GM12878 (cell line): ENCODE measurements at regions of chr5 and their contacts with region 1.

Region 1: DNA sequence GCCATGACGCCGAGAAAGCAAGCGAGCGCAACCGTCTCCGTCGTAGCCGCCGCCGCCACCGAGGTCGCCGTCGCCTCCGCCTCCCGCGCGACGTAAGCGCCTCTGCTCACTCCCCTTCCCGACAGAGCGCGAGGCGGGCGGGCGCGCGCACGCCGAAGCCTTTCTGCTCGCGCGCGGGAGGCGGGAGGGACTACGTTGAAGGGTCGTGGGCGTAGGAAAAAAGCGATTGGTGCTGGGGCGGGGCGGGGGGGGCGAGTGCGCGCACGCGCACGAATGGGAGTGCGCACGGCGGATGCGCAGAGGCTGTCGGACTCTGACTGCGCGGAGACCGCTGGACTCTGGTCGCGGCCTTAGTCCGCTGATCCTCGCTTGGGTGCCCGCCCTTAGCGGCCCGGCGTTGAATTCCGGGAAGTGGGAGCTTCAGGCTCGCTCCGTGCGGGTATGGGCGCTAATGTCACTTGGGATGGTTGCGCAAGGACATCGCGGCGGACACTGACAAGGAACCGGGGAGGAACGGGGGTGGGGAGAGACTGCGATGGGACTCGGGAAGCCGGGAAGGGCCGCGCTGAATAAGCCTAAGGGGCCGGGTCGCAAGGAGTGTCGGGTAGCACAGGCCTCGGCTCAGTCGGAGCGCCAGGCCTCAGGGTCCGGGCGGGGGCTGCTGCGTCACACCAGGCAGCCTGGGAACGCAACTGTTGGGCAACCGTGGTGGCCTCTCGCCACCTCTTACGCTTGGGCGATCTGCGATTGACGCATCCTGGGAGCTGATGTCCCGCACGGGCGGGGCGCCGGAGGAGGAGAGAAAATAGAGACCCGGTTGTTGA is at the start of gene CHD1:
- DNase-seq: peak; percentile 81
- ATAC-seq: peak; percentile 77
- H3K4me3 ChIP-seq: peak within 1 kb of the TSS; percentile 98
- H3K27ac ChIP-seq: peak within 1 kb of the TSS; percentile 99
- H3K4me1 ChIP-seq: peaks cover 19% of the 10 kb centered on the region
- H3K27me3 ChIP-seq: no peaks in the 10 kb centered on the region
- CTCF ChIP-seq: no peak
- EP300 ChIP-seq: peak; percentile 24 to 55; a peak in 3 of 4 replicates
- POLR2A ChIP-seq: peak; percentile 89
- RAD21 ChIP-seq: no peak
- polyA plus RNA-seq, gene CHD1: 25.5 to 32.1 TPM

Region 2: GRCh38 chr5:97183100-97183929 is 1745.8 kb before region 1 on chr5 and contains the start of gene RIOK2:
- CTCF ChIA-PET with region 1: no interaction called
- POLR2A ChIA-PET with region 1: no interaction called
- RAD21 ChIA-PET with region 1: no interaction called
- SMC1A ChIA-PET with region 1: no interaction called
- in situ Hi-C with region 1: no loop called
- intact Hi-C with region 1: loop called (anchors 10 kb)
- DNase-seq: peak; percentile 96
- ATAC-seq: peak; percentile 95
- H3K4me3 ChIP-seq: peak within 1 kb of the TSS; percentile 99
- H3K27ac ChIP-seq: peak within 1 kb of the TSS; percentile 94
- H3K4me1 ChIP-seq: peaks cover 11% of the 10 kb centered on the region
- H3K27me3 ChIP-seq: no peaks in the 10 kb centered on the region
- CTCF ChIP-seq: no peak
- EP300 ChIP-seq: peak in 1 of 2 experiments; percentile 57; a peak in 1 of 4 replicates
- POLR2A ChIP-seq: peak; percentile 86
- RAD21 ChIP-seq: no peak
- polyA plus RNA-seq, gene RIOK2: 55.9 to 59.3 TPM

Region 3: DNA sequence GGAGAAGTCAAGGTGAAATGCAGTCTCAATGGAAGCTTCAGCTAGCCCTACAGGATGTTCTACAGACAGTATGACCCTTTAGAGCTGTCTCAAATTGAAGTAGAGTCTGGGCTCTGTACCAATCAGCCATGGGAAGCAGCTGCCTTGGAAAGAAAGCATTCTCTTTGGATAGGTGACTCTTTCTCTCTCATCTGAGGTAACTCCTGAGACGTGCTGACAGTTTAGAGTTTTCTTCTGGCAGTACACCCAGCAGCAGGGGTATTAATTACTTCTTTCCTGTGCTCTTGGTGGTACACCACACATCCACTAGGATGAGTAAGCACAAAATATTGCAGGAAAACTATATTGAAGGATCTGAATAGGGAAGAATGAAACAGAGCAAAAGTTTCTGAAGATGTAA is 485.2 kb before region 1 on chr5:
- CTCF ChIA-PET with region 1: no interaction called
- POLR2A ChIA-PET with region 1: no interaction called
- RAD21 ChIA-PET with region 1: no interaction called
- SMC1A ChIA-PET with region 1: no interaction called
- in situ Hi-C with region 1: no loop called
- intact Hi-C with region 1: no loop called
- DNase-seq: no peak
- ATAC-seq: no peak
- H3K4me3 ChIP-seq: no peak overlapping the region
- H3K27ac ChIP-seq: no peak overlapping the region
- H3K4me1 ChIP-seq: no peaks in the 10 kb centered on the region
- H3K27me3 ChIP-seq: no peaks in the 10 kb centered on the region; a peak in 1 of 4 replicates
- CTCF ChIP-seq: no peak
- EP300 ChIP-seq: no peak
- POLR2A ChIP-seq: no peak
- RAD21 ChIP-seq: no peak

Region 4: DNA sequence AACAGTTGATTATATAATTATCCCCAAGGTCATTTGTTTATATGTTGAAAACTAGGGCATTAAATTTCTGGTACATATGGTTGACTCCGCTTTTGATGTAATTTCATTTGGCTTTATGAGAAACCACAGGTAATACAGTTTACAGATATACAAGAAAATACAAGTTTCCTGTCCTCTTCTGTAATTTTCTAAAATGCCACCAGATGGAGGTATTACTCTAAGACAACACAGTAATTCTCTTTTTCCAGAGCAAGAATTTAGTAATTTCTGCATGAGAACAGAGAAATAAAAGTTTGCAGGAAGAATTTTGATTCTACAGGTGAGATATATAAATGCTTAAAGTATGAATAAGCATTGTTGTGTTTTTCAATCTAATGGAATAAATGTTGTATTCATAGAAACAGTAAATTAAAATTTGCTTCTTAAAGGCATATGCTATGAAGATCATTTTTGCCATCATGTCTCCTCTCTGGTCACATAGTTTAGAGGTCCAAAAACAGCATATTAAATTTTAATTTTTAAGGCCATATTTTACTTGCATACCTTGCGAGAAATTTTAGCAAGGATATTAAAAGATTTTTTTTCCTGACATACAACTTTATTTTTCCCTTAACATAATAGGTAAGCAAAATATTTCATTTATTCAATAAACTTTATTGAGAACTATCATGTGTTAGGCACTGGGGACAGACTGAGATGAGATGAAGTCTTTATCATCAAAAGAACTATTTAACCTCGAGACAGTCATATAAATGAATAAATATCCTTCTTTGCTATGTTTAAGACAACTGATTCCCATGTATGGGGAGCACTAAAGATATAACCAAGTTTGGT is 23.0 kb before region 1 on chr5:
- CTCF ChIA-PET with region 1: interaction called, 10 read pairs
- POLR2A ChIA-PET with region 1: interaction called, 4 read pairs
- RAD21 ChIA-PET with region 1: interaction called, 6 read pairs
- SMC1A ChIA-PET with region 1: interaction called, 7 read pairs
- in situ Hi-C with region 1: no loop called
- intact Hi-C with region 1: loop called (anchors 2 kb)
- DNase-seq: no peak
- ATAC-seq: peak; percentile 70
- H3K4me3 ChIP-seq: no peak overlapping the region
- H3K27ac ChIP-seq: no peak overlapping the region
- H3K4me1 ChIP-seq: no peaks in the 10 kb centered on the region; the same call in 1 of the 2 replicates
- H3K27me3 ChIP-seq: no peaks in the 10 kb centered on the region
- CTCF ChIP-seq: peak; percentile 47 to 65 (median 47); a peak in 5 of 6 replicates
- EP300 ChIP-seq: no peak
- POLR2A ChIP-seq: no peak
- RAD21 ChIP-seq: peak; percentile 92

Region 5: DNA sequence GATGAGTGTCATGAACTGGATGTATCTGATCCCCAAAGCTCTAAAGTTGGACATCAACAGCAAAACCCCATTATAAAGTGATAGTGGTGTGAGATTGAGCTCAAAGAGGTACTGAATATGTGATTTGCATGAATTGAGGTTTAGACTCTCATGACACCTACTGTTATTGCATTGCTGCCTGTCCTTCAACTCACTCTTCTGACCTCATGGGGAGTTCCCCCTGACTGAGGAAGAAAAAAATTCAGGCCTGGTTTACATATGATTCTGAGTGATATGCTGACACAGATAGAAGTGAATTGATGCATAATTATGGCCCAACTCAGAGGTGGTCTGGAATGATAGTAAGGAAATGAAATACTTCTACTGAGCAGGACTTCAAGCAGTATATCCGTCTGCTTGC is 75.9 kb after region 1 on chr5:
- CTCF ChIA-PET with region 1: interaction called, 3 read pairs
- POLR2A ChIA-PET with region 1: interaction called, 5 read pairs
- RAD21 ChIA-PET with region 1: interaction called, 3 read pairs
- SMC1A ChIA-PET with region 1: interaction called, 5 read pairs
- in situ Hi-C with region 1: no loop called
- intact Hi-C with region 1: loop called (anchors 5 kb)
- DNase-seq: peak; percentile 61
- ATAC-seq: peak; percentile 98
- H3K4me3 ChIP-seq: no peak overlapping the region
- H3K27ac ChIP-seq: no peak overlapping the region
- H3K4me1 ChIP-seq: peaks cover 8% of the 10 kb centered on the region
- H3K27me3 ChIP-seq: no peaks in the 10 kb centered on the region
- CTCF ChIP-seq: no peak; a peak in 1 of 6 replicates
- EP300 ChIP-seq: peak; percentile 38 to 72; a peak in 1 of 4 replicates
- POLR2A ChIP-seq: no peak
- RAD21 ChIP-seq: no peak

Region 6: GRCh38 chr5:99025298-99026045 is 96.4 kb after region 1 on chr5:
- CTCF ChIA-PET with region 1: interaction called, 20 read pairs
- POLR2A ChIA-PET with region 1: interaction called, 23 read pairs
- RAD21 ChIA-PET with region 1: interaction called, 10 read pairs
- SMC1A ChIA-PET with region 1: interaction called, 39 read pairs
- in situ Hi-C with region 1: loop called (anchors 5 kb)
- intact Hi-C with region 1: loop called (anchors 1 kb)
- DNase-seq: no peak
- ATAC-seq: no peak
- H3K4me3 ChIP-seq: no peak overlapping the region
- H3K27ac ChIP-seq: peak overlapping the region; percentile 95
- H3K4me1 ChIP-seq: peaks cover 41% of the 10 kb centered on the region
- H3K27me3 ChIP-seq: no peaks in the 10 kb centered on the region
- CTCF ChIP-seq: no peak
- EP300 ChIP-seq: peak in 1 of 2 experiments; percentile 42; a peak in 2 of 4 replicates
- POLR2A ChIP-seq: no peak
- RAD21 ChIP-seq: no peak

Region 7: GRCh38 chr5:99866740-99867139 is 937.7 kb after region 1 on chr5:
- CTCF ChIA-PET with region 1: no interaction called
- POLR2A ChIA-PET with region 1: no interaction called
- RAD21 ChIA-PET with region 1: no interaction called
- SMC1A ChIA-PET with region 1: no interaction called
- in situ Hi-C with region 1: no loop called
- intact Hi-C with region 1: no loop called
- DNase-seq: no peak
- ATAC-seq: peak; percentile 81
- H3K4me3 ChIP-seq: no peak overlapping the region
- H3K27ac ChIP-seq: no peak overlapping the region
- H3K4me1 ChIP-seq: no peaks in the 10 kb centered on the region
- H3K27me3 ChIP-seq: no peaks in the 10 kb centered on the region
- CTCF ChIP-seq: no peak
- EP300 ChIP-seq: no peak
- POLR2A ChIP-seq: no peak
- RAD21 ChIP-seq: no peak